Tibial artery (tissue), 4 donors: ENCODE measurements at regions of chr1 and their contacts with region 1.

Region 1: GRCh38 chr1:106406114-106406513 is 650.4 kb upstream of the PRMT6 start:
- DNase-seq: no peak
- H3K4me3 ChIP-seq: no peak overlapping the region
- H3K27ac ChIP-seq: no peak overlapping the region
- H3K4me1 ChIP-seq: no peaks in the 10 kb centered on the region
- H3K27me3 ChIP-seq: no peaks in the 10 kb centered on the region
- CTCF ChIP-seq: no peak

Region 2: DNA sequence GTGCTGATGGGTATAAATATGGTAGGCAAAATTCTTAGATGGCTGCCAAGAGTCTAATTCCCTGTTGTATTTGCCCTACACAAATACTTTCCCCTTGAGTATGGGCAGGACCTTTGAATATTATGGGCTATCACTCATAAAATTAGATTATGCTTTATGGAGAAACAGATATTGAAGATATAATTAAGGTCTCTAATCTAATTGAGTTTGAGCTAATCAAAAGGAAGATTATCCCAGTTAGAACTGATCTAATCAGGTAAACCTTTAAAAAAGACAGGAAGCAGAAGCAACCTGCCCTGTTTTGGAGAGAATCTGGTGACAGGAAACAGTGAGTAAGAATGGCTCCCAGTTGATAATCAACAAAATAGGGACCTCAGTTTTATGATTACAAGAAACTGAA is 41.4 kb after region 1 on chr1:
- intact Hi-C with region 1: no loop called
- DNase-seq: no peak
- H3K4me3 ChIP-seq: no peak overlapping the region
- H3K27ac ChIP-seq: no peak overlapping the region
- H3K4me1 ChIP-seq: no peaks in the 10 kb centered on the region
- H3K27me3 ChIP-seq: no peaks in the 10 kb centered on the region
- CTCF ChIP-seq: no peak

Region 3: GRCh38 chr1:106793651-106794050 is 387.5 kb after region 1 on chr1:
- intact Hi-C with region 1: no loop called
- DNase-seq: no peak
- H3K4me3 ChIP-seq: no peak overlapping the region
- H3K27ac ChIP-seq: no peak overlapping the region
- H3K4me1 ChIP-seq: no peaks in the 10 kb centered on the region
- H3K27me3 ChIP-seq: no peaks in the 10 kb centered on the region
- CTCF ChIP-seq: no peak

Region 4: DNA sequence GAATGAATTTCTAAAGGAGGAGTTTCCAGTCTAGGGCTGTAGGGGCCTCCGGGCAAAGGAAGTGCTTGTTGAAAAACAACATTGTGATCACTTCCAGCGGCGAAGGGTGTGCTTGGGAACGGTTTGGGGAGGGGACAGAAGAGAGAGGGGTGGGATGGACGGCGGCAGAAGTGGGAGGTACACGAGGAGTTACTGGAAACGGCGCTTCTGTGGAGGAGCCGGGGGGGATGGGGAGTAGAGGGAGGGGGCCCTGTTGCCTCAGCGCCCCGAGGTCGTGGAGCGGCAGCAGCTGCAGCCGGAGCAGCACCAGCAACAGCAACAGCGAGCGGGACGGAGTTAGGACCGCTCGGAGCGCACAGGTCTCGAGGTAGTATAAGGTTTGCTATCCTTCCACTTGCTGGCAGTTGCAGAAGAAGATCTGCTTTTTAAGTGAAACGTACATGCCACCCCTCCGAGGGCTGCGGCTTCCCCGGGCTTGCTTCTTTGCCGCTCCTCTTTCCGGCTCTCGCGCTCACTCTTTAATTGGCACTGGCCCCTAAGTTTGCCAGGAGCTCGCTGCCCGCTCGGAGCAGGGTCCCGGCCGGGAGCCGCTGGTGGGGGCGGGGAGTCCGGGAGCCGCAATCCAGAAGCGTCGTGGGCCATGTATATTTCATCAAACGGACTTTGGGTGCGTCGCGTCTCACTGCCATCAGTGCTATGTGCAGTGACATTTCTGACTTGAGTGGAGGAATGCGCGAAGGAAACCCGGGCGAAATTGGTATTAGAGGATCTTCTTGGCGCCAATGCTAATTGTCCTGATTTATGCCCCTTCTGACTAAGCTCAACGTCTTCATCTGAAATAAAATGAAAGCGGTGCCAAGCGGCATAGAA is 734.0 kb after region 1 on chr1:
- intact Hi-C with region 1: loop called (anchors 5 kb)
- DNase-seq: peak; percentile 22 to 64
- H3K4me3 ChIP-seq: peak overlapping the region; percentile 46 to 49
- H3K27ac ChIP-seq: no peak overlapping the region
- H3K4me1 ChIP-seq: peaks cover 0 to 24% (median 21%) of the 10 kb centered on the region in 4 donors
- H3K27me3 ChIP-seq: peaks cover 0 to 31% of the 10 kb centered on the region in 2 donors
- CTCF ChIP-seq: no peak